Sigmoid colon (tissue), 7 donors: ENCODE measurements at regions of chr3 and their contacts with region 1.

Region 1: GRCh38 chr3:4722103-4722502 is 229.0 kb downstream of the ITPR1 start:
- DNase-seq: no peak
- H3K4me3 ChIP-seq: no peak overlapping the region
- H3K27ac ChIP-seq: peak overlapping the region; percentile 64 to 80 (median 72)
- H3K4me1 ChIP-seq: peaks cover 0 to 55% (median 50%) of the 10 kb centered on the region in 4 donors
- H3K27me3 ChIP-seq: no peaks in the 10 kb centered on the region
- CTCF ChIP-seq: peak in 3 of 4 experiments; percentile 47 to 55 (median 48)
- EP300 ChIP-seq: no peak
- POLR2A ChIP-seq: no peak

Region 2: GRCh38 chr3:4376499-4376898 is 345.6 kb before region 1 on chr3:
- intact Hi-C with region 1: no loop called
- DNase-seq: no peak
- H3K4me3 ChIP-seq: no peak overlapping the region
- H3K27ac ChIP-seq: no peak overlapping the region
- H3K4me1 ChIP-seq: no peaks in the 10 kb centered on the region
- H3K27me3 ChIP-seq: no peaks in the 10 kb centered on the region
- CTCF ChIP-seq: no peak
- EP300 ChIP-seq: no peak
- POLR2A ChIP-seq: no peak

Region 3: DNA sequence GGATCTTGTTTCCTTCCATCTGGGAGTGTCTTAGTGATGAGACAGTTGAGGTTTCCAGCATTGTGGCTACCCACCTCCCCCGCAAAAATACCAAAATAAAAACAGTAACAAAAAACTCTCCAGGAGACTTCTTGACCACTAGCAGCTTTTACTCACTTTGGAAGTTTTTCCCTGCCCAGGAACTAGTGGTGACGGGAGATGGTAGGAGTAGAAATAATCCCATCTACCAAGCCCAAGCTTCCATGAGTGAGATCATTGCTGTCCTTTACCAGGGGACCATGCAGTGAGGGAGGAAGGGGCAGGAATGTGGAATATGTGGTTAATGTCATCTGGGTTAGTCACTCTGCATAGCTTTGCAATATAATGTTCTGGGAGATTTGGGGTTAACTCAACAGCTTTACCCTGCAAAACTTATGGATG is 41.2 kb before region 1 on chr3:
- intact Hi-C with region 1: no loop called
- DNase-seq: no peak
- H3K4me3 ChIP-seq: no peak overlapping the region
- H3K27ac ChIP-seq: peak overlapping the region in 1 of 4 donors; percentile 51
- H3K4me1 ChIP-seq: peaks cover 0 to 18% (median 12%) of the 10 kb centered on the region in 4 donors
- H3K27me3 ChIP-seq: no peaks in the 10 kb centered on the region
- CTCF ChIP-seq: no peak
- EP300 ChIP-seq: no peak
- POLR2A ChIP-seq: no peak

Region 4: GRCh38 chr3:4772171-4772804 is 50.2 kb after region 1 on chr3:
- intact Hi-C with region 1: loop called (anchors 5 kb)
- DNase-seq: peak; percentile 93
- H3K4me3 ChIP-seq: no peak overlapping the region
- H3K27ac ChIP-seq: peak overlapping the region; percentile 63 to 83 (median 74)
- H3K4me1 ChIP-seq: peaks cover 0 to 37% (median 27%) of the 10 kb centered on the region in 4 donors
- H3K27me3 ChIP-seq: no peaks in the 10 kb centered on the region
- CTCF ChIP-seq: no peak
- EP300 ChIP-seq: no peak
- POLR2A ChIP-seq: no peak

Region 5: GRCh38 chr3:4814305-4814903 is 92.3 kb after region 1 on chr3:
- intact Hi-C with region 1: loop called (anchors 5 kb)
- DNase-seq: no peak
- H3K4me3 ChIP-seq: no peak overlapping the region
- H3K27ac ChIP-seq: peak overlapping the region; percentile 0 to 65 (median 30)
- H3K4me1 ChIP-seq: peaks cover 0 to 20% (median 17%) of the 10 kb centered on the region in 4 donors
- H3K27me3 ChIP-seq: no peaks in the 10 kb centered on the region
- CTCF ChIP-seq: no peak
- EP300 ChIP-seq: no peak
- POLR2A ChIP-seq: no peak

Region 6: GRCh38 chr3:4826237-4827100 is 104.4 kb after region 1 on chr3:
- intact Hi-C with region 1: loop called (anchors 5 kb)
- DNase-seq: peak; percentile 91
- H3K4me3 ChIP-seq: no peak overlapping the region
- H3K27ac ChIP-seq: peak overlapping the region; percentile 57 to 86 (median 76)
- H3K4me1 ChIP-seq: peaks cover 0 to 66% (median 47%) of the 10 kb centered on the region in 4 donors
- H3K27me3 ChIP-seq: no peaks in the 10 kb centered on the region
- CTCF ChIP-seq: no peak
- EP300 ChIP-seq: peak in 1 of 4 donors; percentile 75
- POLR2A ChIP-seq: peak in 1 of 2 donors; percentile 14

Region 7: GRCh38 chr3:4986782-4987537 is 264.9 kb after region 1 on chr3:
- intact Hi-C with region 1: loop called (anchors 2 kb)
- DNase-seq: peak; percentile 99
- H3K4me3 ChIP-seq: peak overlapping the region; percentile 21 to 54 (median 46)
- H3K27ac ChIP-seq: peak overlapping the region; percentile 98 to 99 (median 98)
- H3K4me1 ChIP-seq: peaks cover 0 to 65% (median 56%) of the 10 kb centered on the region in 4 donors
- H3K27me3 ChIP-seq: no peaks in the 10 kb centered on the region
- CTCF ChIP-seq: no peak
- EP300 ChIP-seq: peak; percentile 75 to 99 (median 90)
- POLR2A ChIP-seq: peak; percentile 51 to 55

Region 8: GRCh38 chr3:5026331-5027218 is 304.5 kb after region 1 on chr3:
- intact Hi-C with region 1: loop called (anchors 2 kb)
- DNase-seq: peak; percentile 94
- H3K4me3 ChIP-seq: peak overlapping the region; percentile 35 to 64 (median 56)
- H3K27ac ChIP-seq: peak overlapping the region; percentile 68 to 91 (median 78)
- H3K4me1 ChIP-seq: peaks cover 0 to 18% (median 7%) of the 10 kb centered on the region in 4 donors
- H3K27me3 ChIP-seq: no peaks in the 10 kb centered on the region
- CTCF ChIP-seq: peak; percentile 65 to 80 (median 74)
- EP300 ChIP-seq: peak in 2 of 4 donors; percentile 34 to 55
- POLR2A ChIP-seq: no peak

Region 9: GRCh38 chr3:5053021-5053831 is 331.1 kb after region 1 on chr3:
- intact Hi-C with region 1: no loop called
- DNase-seq: peak; percentile 63
- H3K4me3 ChIP-seq: no peak overlapping the region
- H3K27ac ChIP-seq: peak overlapping the region in 2 of 4 donors; percentile 5 to 60
- H3K4me1 ChIP-seq: peaks cover 0 to 21% (median 6%) of the 10 kb centered on the region in 4 donors
- H3K27me3 ChIP-seq: no peaks in the 10 kb centered on the region
- CTCF ChIP-seq: no peak
- EP300 ChIP-seq: no peak
- POLR2A ChIP-seq: no peak

Region 10: DNA sequence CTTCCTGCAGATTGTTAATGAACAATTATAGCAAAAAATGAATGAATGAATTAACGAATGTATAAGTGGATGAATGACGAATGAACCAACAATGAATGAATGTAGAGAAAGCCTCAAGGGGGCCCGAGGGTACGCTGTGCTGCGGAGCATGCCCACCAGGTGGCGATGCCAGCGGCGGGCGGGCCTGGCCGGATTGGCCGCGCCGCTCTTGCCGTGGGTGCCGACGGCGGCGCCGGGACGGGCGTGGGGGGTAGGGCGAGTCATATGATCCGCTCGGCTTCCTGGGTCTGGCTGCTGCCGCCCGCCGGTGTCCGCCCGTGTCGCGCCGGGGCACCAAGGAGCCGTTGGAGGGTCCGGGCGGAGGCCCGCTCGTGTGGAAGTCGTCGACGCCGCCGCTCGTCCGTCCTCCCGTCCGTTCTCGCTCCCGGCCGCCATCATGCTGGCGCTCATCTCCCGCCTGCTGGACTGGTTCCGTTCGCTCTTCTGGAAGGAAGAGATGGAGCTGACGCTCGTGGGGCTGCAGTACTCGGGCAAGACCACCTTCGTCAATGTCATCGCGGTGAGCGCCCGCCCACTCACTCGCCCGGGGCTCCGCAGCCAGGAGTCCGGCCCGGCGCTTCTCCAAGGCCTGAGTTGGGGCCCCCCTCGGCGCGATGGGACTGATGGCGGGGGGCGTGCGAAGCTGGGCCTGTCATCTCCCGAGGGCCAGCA is 400.1 kb after region 1 on chr3 and contains the start of gene ARL8B:
- intact Hi-C with region 1: loop called (anchors 5 kb)
- DNase-seq: peak; percentile 94
- H3K4me3 ChIP-seq: peak within 1 kb of the TSS; percentile 89 to 100 (median 96)
- H3K27ac ChIP-seq: peak within 1 kb of the TSS; percentile 87 to 98 (median 92)
- H3K4me1 ChIP-seq: peaks cover 0 to 49% (median 35%) of the 10 kb centered on the region in 4 donors
- H3K27me3 ChIP-seq: no peaks in the 10 kb centered on the region
- CTCF ChIP-seq: peak; percentile 72 to 92 (median 90)
- EP300 ChIP-seq: no peak
- POLR2A ChIP-seq: peak; percentile 27 to 57
- total RNA-seq, gene ARL8B: 47.2 to 55.9 (median 50.3) TPM